ENCODE measurements at regions of chr7 and their contacts with region 1.

Region 1: DNA sequence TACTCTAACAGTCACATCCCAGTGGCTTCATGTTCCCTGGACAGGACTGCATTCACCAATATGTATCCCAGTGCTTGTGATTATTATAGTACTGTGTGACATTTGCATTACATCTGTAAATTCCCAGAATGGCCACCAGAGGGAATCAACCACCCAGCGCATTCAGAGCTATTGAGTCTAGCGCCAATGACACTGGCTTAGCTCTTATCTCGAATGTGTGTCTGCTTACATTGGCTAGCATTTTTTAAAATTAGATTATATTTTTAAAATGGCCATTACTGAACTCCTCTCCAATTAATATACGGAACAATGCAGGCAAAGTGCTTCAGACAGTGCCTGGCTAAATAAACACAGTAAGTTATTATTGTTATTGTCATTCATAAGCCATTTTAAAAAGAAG is 36.3 kb downstream of the TRIL start:
- DNase-seq: peak; percentile 58 to 61
- ATAC-seq: peak; percentile 92 to 98
- H3K4me3 ChIP-seq: no peak overlapping the region
- H3K27ac ChIP-seq: no peak overlapping the region
- H3K4me1 ChIP-seq: 0 out of 3 replicates have a peak, but pooled peaks cover 2% of the 10 kb centered on the region
- CTCF ChIP-seq: peak; percentile 67
- EP300 ChIP-seq: no peak
- POLR2A ChIP-seq: no peak
- RAD21 ChIP-seq: peak; percentile 53 to 54; a peak in 4 of 5 replicates

Region 2: GRCh38 chr7:28700790-28701203 is 221.0 kb before region 1 on chr7:
- CTCF ChIA-PET with region 1: no interaction called
- POLR2A ChIA-PET with region 1: no interaction called
- DNase-seq: no peak
- ATAC-seq: no peak
- H3K4me3 ChIP-seq: no peak overlapping the region
- H3K27ac ChIP-seq: no peak overlapping the region
- H3K4me1 ChIP-seq: no peaks in the 10 kb centered on the region
- CTCF ChIP-seq: no peak
- EP300 ChIP-seq: no peak
- POLR2A ChIP-seq: no peak
- RAD21 ChIP-seq: no peak

Region 3: DNA sequence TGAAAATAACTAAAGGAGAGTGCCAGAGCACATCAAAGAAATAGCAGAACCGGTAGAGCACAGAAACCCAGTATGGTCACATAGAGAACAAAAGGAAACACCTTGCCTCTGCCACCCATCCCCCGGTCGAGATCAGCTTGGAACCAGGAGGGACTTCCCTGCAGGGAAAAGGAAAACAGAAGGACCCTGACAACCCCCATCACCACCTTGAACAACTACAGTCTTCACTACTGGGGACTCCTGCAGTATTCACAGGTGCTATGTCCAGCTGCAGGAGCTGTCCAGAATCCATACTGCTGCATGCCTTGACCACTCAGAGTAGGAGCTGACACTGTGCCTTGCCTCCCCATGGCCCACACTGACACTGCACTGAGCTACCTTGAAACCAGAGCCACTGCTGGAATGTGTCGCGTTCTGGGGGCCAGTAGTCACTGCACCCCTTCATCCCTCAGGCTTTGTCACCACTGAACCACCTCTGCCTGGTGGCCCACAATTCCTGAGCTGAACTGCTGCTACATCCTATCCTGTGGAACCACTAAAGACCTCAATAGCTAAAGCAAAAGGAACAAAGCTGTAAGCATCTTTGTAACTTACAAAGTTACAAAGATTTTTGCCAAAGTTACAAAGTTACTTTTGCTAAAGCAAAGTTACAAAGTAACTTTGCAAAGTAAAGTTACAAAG is 30.5 kb before region 1 on chr7:
- CTCF ChIA-PET with region 1: interaction called, 11 read pairs
- POLR2A ChIA-PET with region 1: no interaction called
- DNase-seq: no peak
- ATAC-seq: no peak
- H3K4me3 ChIP-seq: no peak overlapping the region
- H3K27ac ChIP-seq: no peak overlapping the region
- H3K4me1 ChIP-seq: no peaks in the 10 kb centered on the region
- CTCF ChIP-seq: no peak
- EP300 ChIP-seq: no peak
- POLR2A ChIP-seq: no peak
- RAD21 ChIP-seq: no peak

Region 4: GRCh38 chr7:28904578-28905048 is 17.2 kb before region 1 on chr7:
- CTCF ChIA-PET with region 1: interaction called, 83 read pairs
- POLR2A ChIA-PET with region 1: no interaction called
- DNase-seq: no peak
- ATAC-seq: no peak
- H3K4me3 ChIP-seq: no peak overlapping the region
- H3K27ac ChIP-seq: no peak overlapping the region
- H3K4me1 ChIP-seq: no peaks in the 10 kb centered on the region
- CTCF ChIP-seq: no peak
- EP300 ChIP-seq: no peak
- POLR2A ChIP-seq: no peak
- RAD21 ChIP-seq: no peak

Region 5: DNA sequence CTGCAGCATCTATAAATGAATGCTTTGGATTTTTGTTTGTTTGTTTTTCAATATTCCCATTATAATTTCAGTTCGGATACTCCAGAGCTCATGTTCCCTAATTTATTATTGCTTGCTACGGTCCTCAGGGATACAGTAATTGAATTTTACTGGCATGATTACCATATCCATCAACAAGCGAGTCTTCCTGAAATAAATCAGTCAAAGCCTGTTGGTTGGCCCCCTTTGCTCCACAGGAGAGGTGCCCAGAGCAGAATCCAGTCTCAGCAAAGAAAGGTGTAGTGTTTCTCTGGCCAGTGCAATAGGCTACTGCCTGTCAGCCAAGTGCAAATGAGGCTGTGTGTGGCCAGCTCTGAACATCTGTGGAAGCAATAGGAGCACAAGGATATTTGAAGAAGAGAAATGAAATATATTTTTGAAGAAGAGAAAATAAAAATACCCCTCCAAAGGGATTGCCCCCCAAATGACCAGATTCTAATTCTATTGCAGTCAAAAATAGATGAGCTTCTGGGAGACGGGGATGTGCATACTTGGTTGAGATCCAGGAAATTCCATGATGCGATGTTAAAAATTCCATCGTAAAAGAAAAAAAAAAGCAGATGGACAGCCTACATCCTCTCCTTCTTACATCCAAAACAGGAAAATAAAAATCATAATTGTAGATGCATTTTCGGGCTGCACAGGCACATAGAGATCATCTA is 18.2 kb after region 1 on chr7:
- CTCF ChIA-PET with region 1: interaction called, 46 read pairs
- POLR2A ChIA-PET with region 1: no interaction called
- DNase-seq: no peak
- ATAC-seq: no peak
- H3K4me3 ChIP-seq: no peak overlapping the region
- H3K27ac ChIP-seq: no peak overlapping the region
- H3K4me1 ChIP-seq: no peaks in the 10 kb centered on the region
- CTCF ChIP-seq: no peak
- EP300 ChIP-seq: no peak
- POLR2A ChIP-seq: no peak
- RAD21 ChIP-seq: no peak

Region 6: GRCh38 chr7:28955718-28956619 is 34.1 kb after region 1 on chr7:
- CTCF ChIA-PET with region 1: interaction called, 40 read pairs
- POLR2A ChIA-PET with region 1: no interaction called
- DNase-seq: peak; percentile 33
- ATAC-seq: peak; percentile 59 to 76
- H3K4me3 ChIP-seq: peak overlapping the region; percentile 47
- H3K27ac ChIP-seq: peak overlapping the region in 1 of 2 experiments; percentile 54; a peak in 2 of 6 replicates
- H3K4me1 ChIP-seq: peaks cover 4% of the 10 kb centered on the region; the same call in 2 of the 3 replicates
- CTCF ChIP-seq: peak; percentile 33; the same call in 1 of the 3 replicates
- EP300 ChIP-seq: no peak
- POLR2A ChIP-seq: no peak
- RAD21 ChIP-seq: peak in 1 of 2 experiments; percentile 30; a peak in 1 of 5 replicates

Region 7: GRCh38 chr7:29091715-29092114 is 169.9 kb after region 1 on chr7:
- CTCF ChIA-PET with region 1: interaction called, 393 read pairs
- POLR2A ChIA-PET with region 1: no interaction called
- DNase-seq: peak in 1 of 2 experiments; percentile 10
- ATAC-seq: no peak
- H3K4me3 ChIP-seq: no peak overlapping the region
- H3K27ac ChIP-seq: no peak overlapping the region
- H3K4me1 ChIP-seq: no peaks in the 10 kb centered on the region
- CTCF ChIP-seq: no peak
- EP300 ChIP-seq: no peak
- POLR2A ChIP-seq: no peak
- RAD21 ChIP-seq: no peak

Region 8: DNA sequence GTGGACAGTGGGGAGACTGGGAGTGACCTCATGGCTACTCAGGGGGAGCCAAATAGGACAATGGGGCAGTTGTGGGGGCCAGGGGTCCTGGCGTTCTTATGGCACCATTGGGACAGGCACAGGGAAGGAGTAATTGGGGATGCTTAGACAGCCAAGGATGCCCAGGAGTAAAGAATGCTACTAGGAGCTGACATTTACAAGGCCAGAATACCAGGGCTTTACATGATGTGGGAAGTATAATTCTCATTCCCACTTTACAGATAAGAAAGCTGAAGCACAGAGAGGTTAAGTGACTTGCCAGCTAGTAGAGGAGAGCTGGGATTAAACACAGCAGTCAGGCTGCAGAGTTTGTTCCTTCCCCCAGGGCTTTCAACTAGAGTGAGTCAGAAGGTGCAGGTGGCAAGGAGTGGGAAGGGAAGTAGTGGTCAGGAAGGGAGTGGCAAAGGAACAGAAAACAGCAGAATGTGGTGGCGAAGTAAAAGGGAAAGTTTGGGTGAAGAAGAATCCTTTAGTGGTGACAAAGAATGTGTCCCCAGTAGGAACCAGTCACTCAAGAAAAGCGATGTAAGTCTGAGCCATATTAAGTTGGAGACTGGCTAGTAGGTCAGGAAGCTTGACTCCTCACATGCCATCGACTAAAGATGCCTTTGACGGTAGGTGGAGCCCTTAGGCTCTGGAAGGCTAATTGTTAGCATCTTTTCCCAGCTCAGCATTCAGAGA is 191.7 kb after region 1 on chr7:
- CTCF ChIA-PET with region 1: interaction called, 393 read pairs
- POLR2A ChIA-PET with region 1: no interaction called
- DNase-seq: peak; percentile 15
- ATAC-seq: peak; percentile 69 to 71; a peak in 3 of 6 replicates
- H3K4me3 ChIP-seq: no peak overlapping the region
- H3K27ac ChIP-seq: no peak overlapping the region
- H3K4me1 ChIP-seq: no peaks in the 10 kb centered on the region
- CTCF ChIP-seq: peak; percentile 47
- EP300 ChIP-seq: no peak
- POLR2A ChIP-seq: no peak
- RAD21 ChIP-seq: peak; percentile 44 to 49; a peak in 3 of 5 replicates

Region 9: GRCh38 chr7:29255906-29256782 is 334.3 kb after region 1 on chr7:
- CTCF ChIA-PET with region 1: no interaction called
- POLR2A ChIA-PET with region 1: no interaction called
- DNase-seq: no peak
- ATAC-seq: no peak
- H3K4me3 ChIP-seq: no peak overlapping the region
- H3K27ac ChIP-seq: no peak overlapping the region
- H3K4me1 ChIP-seq: no peaks in the 10 kb centered on the region
- CTCF ChIP-seq: no peak
- EP300 ChIP-seq: no peak
- POLR2A ChIP-seq: no peak
- RAD21 ChIP-seq: no peak

Measured in A549 (cell line).